OCI-LY7 (cell line): ENCODE measurements at regions of chr17 and their contacts with region 1.

Region 1: DNA sequence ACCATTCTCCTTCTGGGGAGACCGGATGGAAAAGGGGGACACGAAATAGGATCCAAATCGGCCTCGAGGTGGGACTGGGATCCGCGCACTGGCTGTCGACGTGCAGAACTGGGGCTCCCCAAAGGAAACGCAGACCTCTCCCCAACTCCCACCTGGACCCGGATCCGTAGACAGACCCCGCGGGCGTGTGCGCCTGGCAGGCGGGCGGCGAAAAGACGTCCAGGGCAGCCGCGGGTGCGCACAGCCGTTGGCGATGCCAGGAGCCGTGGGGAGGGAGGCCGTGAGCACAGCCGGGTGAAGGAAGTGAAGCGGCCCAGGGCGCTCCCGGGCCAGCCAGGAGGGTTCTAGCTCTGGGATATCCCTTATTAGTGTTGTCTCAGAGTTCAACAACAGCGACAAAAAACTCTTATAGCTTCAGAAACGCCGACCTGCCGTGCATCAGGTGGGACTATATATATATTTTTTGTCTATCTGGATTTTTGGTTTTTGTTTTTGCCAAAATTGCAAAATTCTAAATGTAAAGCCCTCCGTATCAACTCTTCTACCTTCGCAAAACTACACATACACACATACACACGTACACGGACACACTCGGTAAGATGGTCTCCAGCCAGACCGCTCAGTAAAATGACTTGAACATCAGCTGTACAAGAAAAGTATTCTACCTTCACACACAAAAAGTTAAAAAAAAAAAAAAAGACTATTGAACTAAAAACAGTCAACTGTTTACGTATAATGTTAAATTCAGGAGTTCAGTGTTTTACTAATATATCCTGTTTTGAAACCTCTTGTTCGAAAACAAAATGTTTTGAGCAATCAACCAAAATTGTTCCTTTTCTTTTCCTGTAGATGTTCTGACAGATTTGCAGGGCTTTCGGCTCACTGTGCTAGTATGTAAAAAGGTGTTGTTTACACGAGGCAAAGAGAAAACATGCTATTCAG is 5.2 kb upstream of the AATF start:
- DNase-seq: no peak
- H3K4me3 ChIP-seq: no peak overlapping the region
- H3K27ac ChIP-seq: no peak overlapping the region
- H3K4me1 ChIP-seq: peaks cover 10% of the 10 kb centered on the region
- CTCF ChIP-seq: no peak

Region 2: DNA sequence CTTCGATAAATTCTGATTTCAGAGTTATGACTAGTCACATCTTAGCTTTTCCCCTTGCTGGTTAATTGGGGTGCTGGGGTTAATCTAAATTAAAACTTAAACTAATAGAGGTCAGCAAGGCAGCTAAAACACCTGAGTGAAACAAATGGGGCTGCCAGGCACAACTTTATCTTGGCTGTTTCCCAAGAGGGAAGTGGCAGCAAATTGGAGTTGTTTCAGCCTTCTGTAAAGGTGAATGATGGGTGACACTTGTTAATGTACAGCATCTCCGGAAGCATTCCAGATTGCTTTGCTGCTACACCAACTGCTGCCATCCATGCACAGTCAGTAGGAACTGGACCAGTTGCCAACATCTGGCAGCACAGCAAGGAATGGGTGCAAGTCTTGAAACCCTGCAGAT is 49.2 kb after region 1 on chr17:
- CTCF ChIA-PET with region 1: no interaction called
- POLR2A ChIA-PET with region 1: no interaction called
- intact Hi-C with region 1: loop called (anchors 1 kb)
- DNase-seq: no peak
- H3K4me3 ChIP-seq: no peak overlapping the region
- H3K27ac ChIP-seq: no peak overlapping the region
- H3K4me1 ChIP-seq: peaks cover 4% of the 10 kb centered on the region
- CTCF ChIP-seq: no peak